Colonic mucosa (tissue), 4 donors: ENCODE measurements at regions of chr5 and their contacts with region 1.

Region 1: DNA sequence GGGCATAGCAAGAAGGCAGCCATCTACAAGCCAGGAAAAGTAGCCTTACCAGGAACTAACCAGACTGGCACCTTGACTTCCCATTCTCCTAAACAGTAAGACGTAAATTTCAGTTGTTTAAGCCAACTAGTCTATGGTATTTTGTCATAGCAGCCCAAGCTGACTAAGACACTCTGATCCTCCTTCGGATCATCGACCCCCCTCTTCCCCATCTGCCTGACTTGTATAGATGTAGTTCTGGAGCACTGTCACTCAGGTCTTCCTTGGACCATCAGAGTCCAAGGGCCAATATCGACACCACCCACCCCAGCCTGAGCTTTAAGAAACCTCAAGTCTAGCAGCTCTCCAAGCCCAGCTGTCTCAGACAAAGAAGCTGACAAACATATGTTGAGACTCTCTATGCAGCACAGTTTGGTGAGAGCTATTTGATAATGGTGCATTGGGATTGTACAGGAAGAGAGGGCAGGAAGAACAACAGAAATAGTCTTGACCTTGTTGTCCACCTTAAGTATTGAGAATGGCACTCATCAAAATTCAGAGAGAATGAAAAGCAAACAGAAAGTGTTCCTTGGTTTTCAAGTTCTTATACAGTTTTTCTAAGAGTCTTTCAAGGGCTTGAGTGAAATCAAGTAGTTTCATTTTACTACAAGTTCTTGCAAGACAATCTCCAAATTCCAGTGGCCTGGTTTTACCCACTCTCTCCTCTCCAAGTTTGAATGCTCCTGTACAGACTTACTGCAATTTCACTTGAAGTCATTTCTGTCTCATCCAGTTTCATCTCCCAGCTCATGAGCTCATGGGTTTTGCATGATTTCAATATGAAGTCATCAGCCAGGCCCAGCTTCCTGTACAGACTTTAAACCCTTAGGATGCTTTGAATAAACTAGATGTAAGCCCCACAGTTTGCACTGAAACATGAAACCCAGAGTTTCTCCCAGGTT is 122.3 kb upstream of the RAI14 start:
- DNase-seq: no peak
- H3K4me3 ChIP-seq: no peak overlapping the region
- H3K27ac ChIP-seq: no peak overlapping the region
- H3K4me1 ChIP-seq: no peaks in the 10 kb centered on the region
- H3K27me3 ChIP-seq: no peaks in the 10 kb centered on the region
- CTCF ChIP-seq: no peak

Region 2: GRCh38 chr5:34022121-34022705 is 511.6 kb before region 1 on chr5:
- intact Hi-C with region 1: no loop called
- DNase-seq: no peak
- H3K4me3 ChIP-seq: no peak overlapping the region
- H3K27ac ChIP-seq: no peak overlapping the region
- H3K4me1 ChIP-seq: no peaks in the 10 kb centered on the region
- H3K27me3 ChIP-seq: no peaks in the 10 kb centered on the region
- CTCF ChIP-seq: no peak

Region 3: GRCh38 chr5:34838785-34839714 is 305.2 kb after region 1 on chr5 and contains the start of gene TTC23L:
- intact Hi-C with region 1: loop called (anchors 10 kb)
- DNase-seq: peak; percentile 91
- H3K4me3 ChIP-seq: peak within 1 kb of the TSS; percentile 84
- H3K27ac ChIP-seq: peak within 1 kb of the TSS; percentile 48
- H3K4me1 ChIP-seq: no peaks in the 10 kb centered on the region
- H3K27me3 ChIP-seq: no peaks in the 10 kb centered on the region
- CTCF ChIP-seq: no peak
- total RNA-seq, gene TTC23L: 0.35 TPM in 1 of 2 donors, not detected in the other